ENCODE measurements at regions of chr15 and their contacts with region 1.

Region 1: DNA sequence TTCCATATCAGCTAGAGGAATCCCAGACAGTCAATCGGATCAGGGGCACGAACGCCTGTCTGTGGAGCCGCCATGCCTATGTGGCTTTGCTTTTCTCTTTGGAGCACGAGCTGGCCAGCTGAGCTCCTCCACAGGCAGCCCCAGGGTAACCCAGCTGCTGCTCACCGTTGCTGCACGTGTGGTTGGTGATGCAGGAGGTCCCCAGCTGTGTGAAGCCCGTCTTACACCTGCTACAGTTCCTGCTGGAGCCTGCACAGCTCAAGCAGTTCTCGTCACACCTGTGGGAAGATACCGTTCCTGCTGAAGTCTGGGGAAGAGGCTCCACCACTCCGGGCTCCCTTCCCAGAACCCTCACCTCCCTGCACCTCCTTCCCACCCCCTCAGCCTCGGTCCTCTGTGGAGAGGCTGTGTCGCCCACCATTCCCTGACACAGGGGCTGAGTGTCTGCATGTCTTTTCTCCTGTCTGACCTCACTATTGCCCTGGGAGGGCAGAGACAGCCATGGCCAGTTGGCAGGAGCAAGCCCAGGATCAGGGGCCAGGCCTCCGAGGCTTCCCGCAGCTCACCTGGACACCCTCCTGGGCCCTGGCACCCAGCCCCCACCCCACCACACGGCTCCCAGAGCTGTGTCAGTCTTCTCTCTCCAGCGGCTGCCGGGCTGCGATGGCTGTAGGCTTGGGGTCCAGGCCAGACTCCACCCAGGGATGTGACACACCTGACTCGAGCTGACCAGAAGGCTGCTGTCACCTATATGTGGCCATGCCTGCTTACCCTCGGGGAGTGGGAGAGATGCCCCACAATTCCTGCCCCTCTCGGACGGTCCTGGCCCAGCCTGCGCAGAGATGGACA is 12.2 kb upstream of the SNRPA1 start:
- DNase-seq: no peak
- H3K4me3 ChIP-seq: no peak overlapping the region
- H3K27ac ChIP-seq: no peak overlapping the region
- H3K4me1 ChIP-seq: peaks cover 0 to 3% (median 0%) of the 10 kb centered on the region in 3 donors
- H3K27me3 ChIP-seq: peaks cover 0 to 36% (median 0%) of the 10 kb centered on the region in 4 donors
- CTCF ChIP-seq: no peak
- POLR2A ChIP-seq: no peak

Region 2: GRCh38 chr15:101499863-101500713 is 192.8 kb after region 1 on chr15:
- intact Hi-C with region 1: loop called (anchors 10 kb)
- DNase-seq: no peak
- H3K4me3 ChIP-seq: no peak overlapping the region
- H3K27ac ChIP-seq: peak overlapping the region in 3 of 4 donors; percentile 24 to 64 (median 48)
- H3K4me1 ChIP-seq: peaks cover 5 to 61% (median 12%) of the 10 kb centered on the region in 3 donors
- H3K27me3 ChIP-seq: peaks cover 0 to 57% (median 0%) of the 10 kb centered on the region in 4 donors
- CTCF ChIP-seq: no peak
- POLR2A ChIP-seq: no peak

Region 3: DNA sequence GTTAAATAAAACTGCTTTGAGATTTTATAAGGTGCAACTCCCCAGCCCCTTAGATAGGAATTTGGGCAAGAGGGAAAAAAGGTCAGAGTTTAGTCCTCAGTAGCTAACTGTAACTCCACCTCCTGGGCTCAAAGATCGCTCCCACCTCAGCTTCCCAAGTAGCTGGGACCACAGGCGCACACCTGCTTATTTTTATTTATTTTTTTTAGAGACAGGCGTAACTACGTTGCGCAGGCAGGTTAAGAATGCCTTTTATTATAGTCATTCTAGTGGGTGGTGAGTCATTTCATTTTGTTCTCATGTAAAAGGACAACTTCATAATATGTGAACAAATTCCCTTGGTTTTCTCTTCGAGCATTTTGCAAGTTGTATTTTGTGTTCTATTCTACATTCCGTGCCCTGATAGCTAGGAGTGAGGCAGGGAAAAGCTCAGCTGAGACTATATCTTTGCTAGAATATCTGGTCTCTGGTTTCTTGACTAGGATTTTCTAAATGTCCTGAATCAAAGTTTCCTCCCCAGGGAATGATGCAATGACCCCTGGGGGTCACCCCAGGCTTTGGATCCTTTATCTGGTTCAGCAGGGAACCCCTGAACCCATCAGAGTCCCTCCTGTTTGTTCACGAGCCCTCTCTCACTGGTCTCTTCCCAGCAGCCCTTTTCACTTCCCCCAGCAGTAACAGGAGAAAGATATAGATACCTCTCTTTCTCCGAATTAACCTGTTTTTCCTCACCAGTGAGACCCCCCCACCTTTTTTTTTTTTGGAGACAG is 330.5 kb after region 1 on chr15:
- intact Hi-C with region 1: loop called (anchors 5 kb)
- DNase-seq: no peak
- H3K4me3 ChIP-seq: no peak overlapping the region
- H3K27ac ChIP-seq: no peak overlapping the region
- H3K4me1 ChIP-seq: peaks cover 6 to 21% (median 6%) of the 10 kb centered on the region in 3 donors
- H3K27me3 ChIP-seq: no peaks in the 10 kb centered on the region
- CTCF ChIP-seq: no peak
- POLR2A ChIP-seq: no peak

Measured in esophagus squamous epithelium (tissue), 5 donors.